AG04450 (cell line): ENCODE measurements at regions of chr18 and their contacts with region 1.

Region 1: DNA sequence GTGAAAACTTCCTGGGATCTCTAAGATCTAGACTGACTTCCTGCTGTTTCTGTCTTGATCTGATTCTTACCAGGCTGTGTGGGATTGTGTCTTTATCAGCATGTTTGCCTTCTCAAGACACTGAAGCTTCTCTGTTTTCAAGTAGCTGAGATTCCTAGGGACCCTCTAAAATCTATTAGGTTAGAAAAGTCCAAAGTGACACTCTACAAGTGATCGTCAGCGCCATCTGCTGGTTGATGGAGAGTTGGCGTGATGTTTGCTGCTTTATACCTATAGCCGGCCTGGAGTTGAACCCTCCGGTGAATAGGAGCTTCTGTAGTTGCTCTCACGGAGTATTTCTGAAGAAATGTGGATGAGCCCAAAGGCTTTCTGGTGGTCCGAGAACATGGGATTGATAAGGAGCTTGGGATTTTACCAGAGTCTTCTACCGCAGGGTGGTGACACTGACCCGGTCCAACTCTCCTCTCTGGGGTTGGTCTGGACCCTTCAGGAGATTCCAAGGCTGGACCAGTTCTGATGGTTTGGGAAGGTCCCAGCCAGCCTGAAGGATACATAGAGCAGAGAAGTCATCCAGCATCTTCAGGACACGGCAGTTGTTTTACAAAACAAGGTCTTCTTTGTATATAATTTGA is 96.0 kb upstream of the TTC39C start:
- DNase-seq: peak; percentile 15
- H3K4me3 ChIP-seq: no peak overlapping the region
- H3K27ac ChIP-seq: no peak overlapping the region
- H3K27me3 ChIP-seq: peaks cover 9% of the 10 kb centered on the region
- CTCF ChIP-seq: peak; percentile 92

Region 2: GRCh38 chr18:23900994-23901393 is 17.5 kb before region 1 on chr18:
- CTCF ChIA-PET with region 1: interaction called, 16 read pairs
- POLR2A ChIA-PET with region 1: no interaction called
- DNase-seq: no peak
- H3K4me3 ChIP-seq: no peak overlapping the region
- H3K27ac ChIP-seq: no peak overlapping the region
- H3K27me3 ChIP-seq: peaks cover 11% of the 10 kb centered on the region
- CTCF ChIP-seq: no peak

Region 3: DNA sequence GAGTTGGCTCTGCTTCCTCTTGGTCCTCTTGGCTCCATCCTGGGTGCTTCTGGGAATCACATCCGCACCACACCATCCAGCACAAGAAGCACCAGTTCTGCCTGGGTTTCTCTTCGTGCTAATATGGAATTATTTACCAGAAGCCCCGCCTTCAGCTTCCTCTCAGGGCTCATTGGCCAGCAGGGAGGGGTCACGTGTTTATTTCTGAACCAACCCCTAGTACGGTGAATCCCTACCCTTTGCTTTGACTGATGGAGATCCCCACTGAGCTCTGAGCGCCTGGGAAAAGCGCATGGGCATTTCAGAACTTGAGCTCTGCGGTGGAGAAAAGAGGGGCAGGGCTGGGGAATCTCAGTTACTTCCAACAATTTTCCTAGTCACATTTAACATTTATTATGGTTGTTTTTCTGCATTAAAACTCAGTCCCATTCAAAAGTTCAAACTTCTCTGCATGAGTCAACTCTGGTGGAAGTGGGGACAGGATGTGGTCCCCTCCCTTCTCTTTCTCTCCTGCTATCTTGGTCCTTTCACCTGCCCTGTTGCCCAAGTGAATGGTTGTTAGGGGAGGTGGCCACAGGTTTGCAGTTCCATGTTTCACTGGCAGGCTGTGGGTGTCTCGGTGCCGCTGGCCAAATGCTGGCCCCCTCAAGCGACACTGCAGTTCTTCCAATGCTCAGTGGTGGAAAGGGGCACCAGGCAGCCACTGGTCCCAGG is 19.7 kb after region 1 on chr18:
- CTCF ChIA-PET with region 1: interaction called, 20 read pairs
- POLR2A ChIA-PET with region 1: no interaction called
- DNase-seq: no peak
- H3K4me3 ChIP-seq: no peak overlapping the region
- H3K27ac ChIP-seq: no peak overlapping the region
- H3K27me3 ChIP-seq: peaks cover 8% of the 10 kb centered on the region
- CTCF ChIP-seq: no peak